ENCODE measurements at regions of chr19 and their contacts with region 1.

Region 1: GRCh38 chr19:34041925-34042521 is 130.3 kb upstream of the LSM14A start:
- DNase-seq: no peak
- H3K4me3 ChIP-seq: no peak overlapping the region
- H3K27me3 ChIP-seq: no peaks in the 10 kb centered on the region; the same call in 1 of the 2 replicates
- CTCF ChIP-seq: peak; percentile 93

Region 2: DNA sequence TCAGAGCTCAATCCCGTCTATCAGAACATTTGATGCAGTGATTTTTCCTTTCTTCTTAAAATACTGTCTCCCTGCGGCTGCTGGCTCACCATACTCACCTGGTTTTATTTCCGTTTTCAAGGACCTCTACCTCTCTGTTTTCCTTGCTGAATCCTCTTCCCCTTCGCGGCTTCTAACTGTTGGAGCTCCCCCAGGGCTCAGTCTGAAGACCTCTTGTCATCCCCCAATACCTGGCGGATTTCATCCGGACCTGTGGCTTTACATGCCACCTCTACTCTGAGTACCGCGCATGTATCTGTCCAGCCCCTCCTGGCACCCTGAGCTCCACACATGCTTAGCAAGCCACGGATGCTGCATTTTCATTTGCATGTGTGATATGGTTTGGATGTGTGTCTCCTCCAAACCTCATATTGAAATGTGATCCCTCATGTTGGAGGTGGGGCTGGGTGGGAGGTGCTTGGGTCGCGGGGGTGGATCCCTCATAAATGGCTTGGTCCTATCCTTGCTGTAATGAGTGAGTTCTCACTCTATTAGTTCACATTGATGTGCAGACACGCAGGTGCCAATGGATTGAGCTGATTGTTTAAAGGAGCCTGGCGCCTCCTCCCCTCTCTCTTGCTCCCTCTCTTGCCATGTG is 24.1 kb after region 1 on chr19:
- CTCF ChIA-PET with region 1: interaction called, 12 read pairs
- POLR2A ChIA-PET with region 1: no interaction called
- DNase-seq: no peak
- H3K4me3 ChIP-seq: no peak overlapping the region
- H3K27me3 ChIP-seq: no peaks in the 10 kb centered on the region
- CTCF ChIP-seq: no peak

Region 3: DNA sequence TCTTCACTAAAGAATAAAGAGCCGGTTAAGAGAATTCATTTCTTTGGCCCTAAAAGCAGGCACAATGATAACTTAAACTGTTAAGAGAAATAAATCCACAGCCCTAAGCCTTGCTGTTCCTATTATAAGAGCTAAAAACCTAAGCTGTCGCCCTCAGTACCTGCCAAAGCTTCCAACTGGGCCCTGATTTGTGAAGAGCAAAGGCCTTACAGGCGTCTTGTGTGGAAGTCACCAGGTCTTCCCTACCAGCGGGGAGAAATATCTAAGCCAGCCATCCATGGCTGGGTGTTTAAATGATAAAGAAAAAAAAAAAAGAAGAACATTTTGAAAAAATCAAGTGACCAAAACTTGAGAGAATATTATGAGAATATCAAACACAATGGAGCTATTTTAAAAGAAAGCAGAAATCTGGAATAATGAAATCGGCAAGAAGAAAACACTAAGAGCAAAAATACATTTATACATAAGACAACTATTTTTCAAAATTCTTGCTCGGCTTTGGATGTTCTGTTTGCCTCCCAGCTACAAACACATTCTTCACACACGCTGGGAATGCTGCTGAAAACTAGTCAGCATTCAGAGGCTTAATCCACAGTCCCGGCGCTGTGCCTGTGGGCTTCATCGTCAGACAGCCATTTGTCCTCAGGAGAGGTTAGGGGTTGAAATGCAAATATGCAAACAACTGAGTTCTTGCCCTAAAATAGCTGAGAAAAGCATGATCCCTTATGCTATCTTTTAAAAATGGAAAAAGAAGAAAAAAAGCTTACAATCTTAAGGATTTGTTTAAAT is 40.5 kb after region 1 on chr19:
- CTCF ChIA-PET with region 1: interaction called, 12 read pairs
- POLR2A ChIA-PET with region 1: no interaction called
- DNase-seq: no peak
- H3K4me3 ChIP-seq: no peak overlapping the region
- H3K27me3 ChIP-seq: no peaks in the 10 kb centered on the region
- CTCF ChIP-seq: no peak

Region 4: GRCh38 chr19:34096020-34096915 is 54.2 kb after region 1 on chr19:
- CTCF ChIA-PET with region 1: interaction called, 49 read pairs
- POLR2A ChIA-PET with region 1: no interaction called
- DNase-seq: no peak
- H3K4me3 ChIP-seq: no peak overlapping the region
- H3K27me3 ChIP-seq: no peaks in the 10 kb centered on the region
- CTCF ChIP-seq: peak; percentile 54

Region 5: DNA sequence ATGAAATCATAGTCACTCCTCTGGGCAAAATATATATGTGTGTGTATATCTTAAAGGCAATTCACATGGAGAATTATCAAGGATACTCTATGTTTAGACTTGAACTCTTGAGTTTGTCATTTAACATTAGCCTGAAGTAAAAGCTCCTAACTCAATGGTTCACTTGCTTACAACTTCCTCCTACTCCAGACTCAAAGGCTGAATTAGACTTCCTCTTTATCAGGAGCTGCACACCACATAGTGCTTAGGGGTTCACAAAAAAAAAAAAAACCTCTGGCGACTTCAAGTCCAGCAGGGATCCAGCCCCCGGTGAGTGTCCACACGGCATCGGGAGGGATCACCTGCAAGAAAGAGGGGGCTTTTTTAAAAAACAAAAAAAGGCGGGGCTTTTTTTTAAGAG is 62.1 kb after region 1 on chr19:
- CTCF ChIA-PET with region 1: interaction called, 11 read pairs
- POLR2A ChIA-PET with region 1: no interaction called
- DNase-seq: no peak
- H3K4me3 ChIP-seq: no peak overlapping the region
- H3K27me3 ChIP-seq: no peaks in the 10 kb centered on the region; the same call in none of the 2 replicates
- CTCF ChIP-seq: no peak

Region 6: GRCh38 chr19:35154525-35155406 is 1112.7 kb after region 1 on chr19 and contains the start of gene FXYD5:
- CTCF ChIA-PET with region 1: no interaction called
- POLR2A ChIA-PET with region 1: no interaction called
- DNase-seq: no peak
- H3K4me3 ChIP-seq: peak within 1 kb of the TSS; percentile 84
- H3K27me3 ChIP-seq: no peaks in the 10 kb centered on the region
- CTCF ChIP-seq: peak; percentile 17; the same call in 1 of the 2 replicates
- polyA plus RNA-seq, gene FXYD5: 248 and 332 TPM in 2 replicates